T-cell (primary cell): ENCODE measurements at regions of chr5 and their contacts with region 1.

Region 1: DNA sequence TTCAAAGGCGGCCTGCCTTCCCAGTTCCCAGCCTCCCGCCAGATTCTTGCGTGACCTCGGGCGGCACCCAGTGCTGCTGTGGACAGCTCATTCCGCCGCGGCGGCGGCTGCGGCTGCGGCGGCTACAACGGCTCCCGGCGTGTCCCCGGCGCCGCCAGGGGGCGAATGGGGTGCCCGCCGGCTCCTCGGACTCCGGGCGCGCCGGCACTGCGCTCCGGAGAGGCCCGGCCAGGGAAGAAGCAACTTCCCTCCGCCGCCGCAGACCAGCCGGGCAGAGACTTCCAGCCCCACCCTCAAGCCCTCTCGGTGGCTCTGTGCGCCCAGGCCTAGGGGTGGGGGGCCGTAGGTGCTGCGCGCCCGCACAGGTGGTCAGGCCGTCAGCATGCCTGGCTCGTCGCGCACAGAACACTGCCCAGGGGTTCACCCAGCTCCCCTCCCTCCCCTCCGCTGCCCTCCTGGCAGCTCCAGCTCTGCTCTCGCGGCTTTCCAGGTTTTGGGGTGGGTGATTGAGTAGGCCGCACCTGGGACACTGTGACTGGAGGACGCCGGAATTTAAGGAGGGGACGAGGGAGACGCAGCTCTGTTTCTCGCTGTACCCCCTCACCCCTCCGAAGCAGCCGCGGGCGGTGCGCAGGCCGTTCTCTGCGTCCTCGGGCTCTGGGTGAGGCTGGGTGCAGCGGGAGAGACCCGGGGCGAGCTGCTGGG is 20.2 kb downstream of the IGIP start:
- DNase-seq: peak in 32 of 35 experiments; percentile 9 to 73 (median 32)
- ATAC-seq: peak; percentile 70 to 82 (median 78)
- H3K4me3 ChIP-seq: peak overlapping the region; percentile 1 to 15
- H3K4me3 Mint-ChIP-seq: peak overlapping the region; percentile 38 to 62 (median 61)
- H3K27ac ChIP-seq: no peak overlapping the region
- H3K27ac Mint-ChIP-seq: no peak overlapping the region
- H3K4me1 ChIP-seq: peaks cover 0 to 25% of the 10 kb centered on the region in 2 experiments
- H3K4me1 Mint-ChIP-seq: peaks cover 25 to 35% (median 33%) of the 10 kb centered on the region in 3 donors
- H3K27me3 ChIP-seq: peaks cover 9 to 31% of the 10 kb centered on the region in 2 experiments
- H3K27me3 Mint-ChIP-seq: peaks cover 8 to 20% of the 10 kb centered on the region in 2 donors

Region 2: GRCh38 chr5:139839232-139839815 is 306.6 kb before region 1 on chr5:
- CTCF ChIA-PET with region 1: interaction called in 1 of 2 experiments, 10 read pairs
- POLR2A ChIA-PET with region 1: no interaction called
- DNase-seq: no peak
- ATAC-seq: no peak
- H3K4me3 ChIP-seq: no peak overlapping the region
- H3K4me3 Mint-ChIP-seq: no peak overlapping the region
- H3K27ac ChIP-seq: no peak overlapping the region
- H3K27ac Mint-ChIP-seq: no peak overlapping the region
- H3K4me1 ChIP-seq: no peaks in the 10 kb centered on the region
- H3K4me1 Mint-ChIP-seq: peaks cover 0 to under 1% (median 0%) of the 10 kb centered on the region in 3 donors
- H3K27me3 ChIP-seq: peaks cover 0 to 41% of the 10 kb centered on the region in 2 experiments
- H3K27me3 Mint-ChIP-seq: peaks cover 32 to 33% of the 10 kb centered on the region in 2 donors

Region 3: DNA sequence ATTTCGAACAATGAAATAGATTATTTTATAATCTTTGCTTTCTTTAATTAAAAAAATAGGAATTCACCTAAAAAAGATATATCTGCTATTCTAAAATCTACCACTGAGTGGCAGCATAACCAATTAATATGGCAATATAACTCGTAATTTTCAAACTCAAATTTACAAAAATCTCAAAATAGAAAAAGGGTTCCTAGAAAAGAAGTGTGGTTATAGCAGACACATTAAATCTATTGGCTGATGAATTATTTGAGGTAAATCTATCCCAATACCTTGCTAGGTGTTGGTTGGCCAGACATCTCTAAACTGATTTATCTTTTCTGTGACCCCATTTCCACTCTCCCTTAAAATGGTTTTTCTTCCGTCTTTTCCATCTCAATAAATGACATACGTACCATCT is 72.7 kb before region 1 on chr5:
- CTCF ChIA-PET with region 1: interaction called, 20 to 42 read pairs
- POLR2A ChIA-PET with region 1: no interaction called
- DNase-seq: peak in 1 of 35 experiments; percentile 68
- ATAC-seq: no peak
- H3K4me3 ChIP-seq: no peak overlapping the region
- H3K4me3 Mint-ChIP-seq: no peak overlapping the region
- H3K27ac ChIP-seq: no peak overlapping the region
- H3K27ac Mint-ChIP-seq: no peak overlapping the region
- H3K4me1 ChIP-seq: no peaks in the 10 kb centered on the region
- H3K4me1 Mint-ChIP-seq: no peaks in the 10 kb centered on the region
- H3K27me3 ChIP-seq: peaks cover 4 to 15% of the 10 kb centered on the region in 2 experiments
- H3K27me3 Mint-ChIP-seq: peaks cover 22 to 25% of the 10 kb centered on the region in 2 donors

Region 4: DNA sequence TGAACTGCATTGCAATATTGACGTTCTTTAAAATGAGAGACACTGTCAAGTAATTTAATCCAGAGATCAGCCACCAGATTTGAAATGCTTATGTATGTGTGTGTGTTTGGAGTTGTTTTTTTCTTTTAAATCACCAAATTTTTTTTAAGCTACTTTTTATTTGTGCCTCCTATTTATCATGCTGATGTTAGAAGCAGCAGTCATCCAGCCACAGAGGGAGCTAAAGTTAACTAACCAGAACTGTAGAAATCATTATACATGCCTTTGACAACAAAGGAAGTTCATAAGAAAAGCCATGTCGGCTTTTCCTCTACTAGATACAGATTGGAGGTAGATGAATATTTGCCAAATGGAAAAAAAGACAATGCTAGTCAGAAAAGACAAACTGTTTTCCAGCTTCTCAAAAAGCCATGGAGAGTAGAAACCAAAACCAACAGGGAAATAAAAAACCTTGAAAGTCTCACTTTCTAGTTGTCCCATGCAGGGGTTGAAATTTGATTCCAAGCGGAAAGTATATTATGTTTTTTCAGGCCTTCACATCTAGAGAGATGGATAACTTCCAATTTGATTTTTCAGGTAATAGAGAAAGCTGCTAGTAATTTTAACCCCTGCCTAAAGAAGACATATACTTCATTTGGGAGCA is 27.6 kb before region 1 on chr5:
- CTCF ChIA-PET with region 1: interaction called, 14 to 17 read pairs
- POLR2A ChIA-PET with region 1: no interaction called
- DNase-seq: peak in 1 of 35 experiments; percentile 31
- ATAC-seq: no peak
- H3K4me3 ChIP-seq: no peak overlapping the region
- H3K4me3 Mint-ChIP-seq: peak overlapping the region in 1 of 3 donors; percentile 44
- H3K27ac ChIP-seq: no peak overlapping the region
- H3K27ac Mint-ChIP-seq: peak overlapping the region in 1 of 2 donors; percentile 47
- H3K4me1 ChIP-seq: peaks cover 11 to 21% of the 10 kb centered on the region in 2 experiments
- H3K4me1 Mint-ChIP-seq: peaks cover 57 to 62% (median 62%) of the 10 kb centered on the region in 3 donors
- H3K27me3 ChIP-seq: no peaks in the 10 kb centered on the region
- H3K27me3 Mint-ChIP-seq: no peaks in the 10 kb centered on the region

Region 5: GRCh38 chr5:140131967-140132409 is 14.0 kb before region 1 on chr5:
- CTCF ChIA-PET with region 1: interaction called, 6 to 12 read pairs
- POLR2A ChIA-PET with region 1: interaction called in 1 of 2 experiments, 10 read pairs
- DNase-seq: no peak
- ATAC-seq: peak; percentile 34 to 77 (median 66)
- H3K4me3 ChIP-seq: no peak overlapping the region
- H3K4me3 Mint-ChIP-seq: peak overlapping the region in 1 of 3 donors; percentile 36
- H3K27ac ChIP-seq: no peak overlapping the region
- H3K27ac Mint-ChIP-seq: peak overlapping the region in 1 of 2 donors; percentile 1
- H3K4me1 ChIP-seq: peaks cover 11 to 12% of the 10 kb centered on the region in 2 experiments
- H3K4me1 Mint-ChIP-seq: peaks cover 51 to 57% (median 56%) of the 10 kb centered on the region in 3 donors
- H3K27me3 ChIP-seq: no peaks in the 10 kb centered on the region
- H3K27me3 Mint-ChIP-seq: no peaks in the 10 kb centered on the region

Region 6: GRCh38 chr5:140182803-140183367 is 36.9 kb after region 1 on chr5:
- CTCF ChIA-PET with region 1: no interaction called
- POLR2A ChIA-PET with region 1: no interaction called
- DNase-seq: no peak
- ATAC-seq: no peak
- H3K4me3 ChIP-seq: no peak overlapping the region
- H3K4me3 Mint-ChIP-seq: no peak overlapping the region
- H3K27ac ChIP-seq: no peak overlapping the region
- H3K27ac Mint-ChIP-seq: no peak overlapping the region
- H3K4me1 ChIP-seq: no peaks in the 10 kb centered on the region
- H3K4me1 Mint-ChIP-seq: no peaks in the 10 kb centered on the region
- H3K27me3 ChIP-seq: no peaks in the 10 kb centered on the region
- H3K27me3 Mint-ChIP-seq: no peaks in the 10 kb centered on the region